K562 (cell line): ENCODE measurements at regions of chrX and their contacts with region 1.

Region 1: GRCh38 chrX:119516157-119516702 is 48.0 kb downstream of the SLC25A5 start:
- DNase-seq: peak; percentile 71 to 76 (median 74)
- ATAC-seq: peak; percentile 91
- H3K4me3 ChIP-seq: no peak overlapping the region
- H3K27ac ChIP-seq: no peak overlapping the region
- H3K4me1 ChIP-seq: no peaks in the 10 kb centered on the region; a peak in 2 of 5 replicates
- H3K27me3 ChIP-seq: no peaks in the 10 kb centered on the region; a peak in 1 of 5 replicates
- CTCF ChIP-seq: peak; percentile 87 to 94 (median 92)
- EP300 ChIP-seq: no peak
- POLR2A ChIP-seq: no peak
- RAD21 ChIP-seq: peak; percentile 79 to 94

Region 2: DNA sequence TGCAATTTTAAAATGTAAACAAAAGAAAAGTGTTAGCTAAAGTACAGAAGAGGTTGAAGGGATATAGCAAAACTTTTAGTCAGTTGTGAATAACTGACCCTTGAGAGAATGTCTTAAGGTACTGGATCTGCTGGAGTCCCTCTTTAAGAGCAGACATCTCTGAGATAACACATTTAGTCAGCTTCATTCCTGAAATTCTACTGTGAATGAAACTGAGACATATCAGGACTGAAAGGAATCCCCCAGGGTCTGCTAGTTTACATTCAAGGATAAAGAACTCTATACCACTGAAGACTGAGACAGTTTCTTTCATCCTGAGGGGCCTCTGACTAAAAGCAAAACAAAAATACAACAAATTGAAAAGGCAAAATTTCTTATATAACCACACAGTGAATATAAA is 225.8 kb before region 1 on chrX:
- CTCF ChIA-PET with region 1: no interaction called
- POLR2A ChIA-PET with region 1: no interaction called
- in situ Hi-C with region 1: no loop called
- intact Hi-C with region 1: loop called (anchors 2 kb)
- DNase-seq: no peak
- ATAC-seq: no peak
- H3K4me3 ChIP-seq: no peak overlapping the region
- H3K27ac ChIP-seq: no peak overlapping the region
- H3K4me1 ChIP-seq: no peaks in the 10 kb centered on the region
- H3K27me3 ChIP-seq: no peaks in the 10 kb centered on the region; a peak in 1 of 5 replicates
- CTCF ChIP-seq: no peak
- EP300 ChIP-seq: no peak
- POLR2A ChIP-seq: no peak
- RAD21 ChIP-seq: no peak

Region 3: DNA sequence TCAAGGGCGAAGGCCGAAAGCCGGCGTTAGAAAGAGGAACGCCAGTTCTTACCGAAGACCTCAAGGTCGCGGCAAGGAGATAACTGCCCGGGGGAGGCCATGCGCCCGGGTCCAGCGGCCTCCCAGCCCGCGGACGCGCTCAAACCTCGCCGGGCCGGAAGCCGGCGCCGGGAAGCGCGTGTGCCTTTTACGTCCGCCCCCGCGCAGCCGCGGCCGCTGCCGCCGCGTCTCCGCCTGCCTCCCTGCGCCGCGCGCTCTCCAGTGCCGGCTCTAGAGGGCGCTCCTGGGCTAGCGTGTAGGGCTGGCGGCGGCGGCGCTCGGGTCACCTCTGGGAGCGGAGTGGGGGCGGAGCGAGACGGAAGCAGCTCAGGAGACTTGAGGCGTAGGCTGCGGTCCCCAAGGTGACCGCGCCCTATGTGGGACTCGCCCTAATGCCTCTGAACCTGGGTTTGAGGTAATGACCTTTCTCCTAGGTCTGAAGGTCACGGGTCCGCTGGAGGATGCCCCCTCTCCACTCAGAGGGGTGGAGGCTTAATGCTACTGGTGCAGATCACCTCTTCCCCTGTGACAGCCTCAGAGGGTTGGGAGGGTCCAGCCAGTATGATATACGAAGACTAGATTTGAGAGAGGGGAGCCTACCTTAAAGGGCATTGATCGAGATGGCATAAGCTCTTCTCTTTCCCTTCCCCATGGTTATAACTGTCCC is 47.1 kb before region 1 on chrX:
- CTCF ChIA-PET with region 1: interaction called, 8 read pairs
- POLR2A ChIA-PET with region 1: interaction called, 6 read pairs
- in situ Hi-C with region 1: no loop called
- intact Hi-C with region 1: loop called (anchors 2 kb)
- DNase-seq: peak; percentile 73 to 94 (median 80)
- ATAC-seq: peak; percentile 86
- H3K4me3 ChIP-seq: peak overlapping the region; percentile 99
- H3K27ac ChIP-seq: peak overlapping the region; percentile 98
- H3K4me1 ChIP-seq: peaks cover 14 to 18% of the 10 kb centered on the region in 2 experiments; a peak in 3 of 5 replicates
- H3K27me3 ChIP-seq: no peaks in the 10 kb centered on the region
- CTCF ChIP-seq: peak; percentile 72 to 93 (median 76)
- EP300 ChIP-seq: peak; percentile 49; the same call in 1 of the 2 replicates
- POLR2A ChIP-seq: peak; percentile 54; the same call in 1 of the 2 replicates
- RAD21 ChIP-seq: peak; percentile 56 to 68

Region 4: GRCh38 chrX:119606280-119607015 is 90.2 kb after region 1 on chrX and contains the start of gene NKRF:
- CTCF ChIA-PET with region 1: no interaction called
- POLR2A ChIA-PET with region 1: no interaction called
- in situ Hi-C with region 1: no loop called
- intact Hi-C with region 1: loop called (anchors 10 kb)
- DNase-seq: peak; percentile 83 to 96 (median 86)
- ATAC-seq: peak; percentile 92
- H3K4me3 ChIP-seq: peak within 1 kb of the TSS; percentile 84
- H3K27ac ChIP-seq: peak within 1 kb of the TSS; percentile 95
- H3K4me1 ChIP-seq: peaks cover 7 to 12% of the 10 kb centered on the region in 2 experiments; a peak in 4 of 5 replicates
- H3K27me3 ChIP-seq: no peaks in the 10 kb centered on the region
- CTCF ChIP-seq: no peak; a peak in 1 of 6 replicates
- EP300 ChIP-seq: no peak
- POLR2A ChIP-seq: peak; percentile 96
- RAD21 ChIP-seq: no peak
- polyA plus RNA-seq, gene NKRF: 8.9 to 10.8 TPM

Region 5: DNA sequence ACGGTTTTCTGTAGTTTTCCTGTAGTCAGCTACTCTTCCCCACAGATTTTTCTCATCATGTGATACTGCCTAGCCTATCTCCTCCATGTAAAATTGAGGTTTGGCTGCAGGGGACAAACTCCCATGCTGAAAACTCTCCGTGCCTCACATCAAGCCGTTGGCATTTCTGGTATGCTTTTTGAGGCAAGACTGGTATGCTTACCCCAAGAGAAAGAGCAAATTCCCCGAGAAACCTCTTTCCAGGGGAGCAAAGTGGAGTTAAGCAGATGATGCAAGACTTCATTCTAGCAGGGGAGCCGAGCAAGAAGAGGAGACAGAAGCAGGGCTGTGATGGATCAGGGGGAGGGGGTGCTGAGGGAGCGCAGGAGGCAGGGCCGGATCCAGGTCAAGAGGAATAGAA is 247.0 kb after region 1 on chrX:
- CTCF ChIA-PET with region 1: no interaction called
- POLR2A ChIA-PET with region 1: no interaction called
- in situ Hi-C with region 1: loop called (anchors 10 kb)
- intact Hi-C with region 1: no loop called
- DNase-seq: no peak
- ATAC-seq: peak; percentile 18; the same call in 2 of the 3 replicates
- H3K4me3 ChIP-seq: no peak overlapping the region
- H3K27ac ChIP-seq: no peak overlapping the region
- H3K4me1 ChIP-seq: peaks cover 0 to 17% of the 10 kb centered on the region in 2 experiments; a peak in 3 of 5 replicates
- H3K27me3 ChIP-seq: no peaks in the 10 kb centered on the region
- CTCF ChIP-seq: no peak
- EP300 ChIP-seq: no peak
- POLR2A ChIP-seq: no peak
- RAD21 ChIP-seq: no peak

Region 6: GRCh38 chrX:119880552-119881437 is 364.6 kb after region 1 on chrX:
- CTCF ChIA-PET with region 1: no interaction called
- POLR2A ChIA-PET with region 1: no interaction called
- in situ Hi-C with region 1: loop called (anchors 10 kb)
- intact Hi-C with region 1: loop called (anchors 5 kb)
- DNase-seq: peak; percentile 32 to 60 (median 48)
- ATAC-seq: peak; percentile 97
- H3K4me3 ChIP-seq: no peak overlapping the region
- H3K27ac ChIP-seq: no peak overlapping the region
- H3K4me1 ChIP-seq: no peaks in the 10 kb centered on the region; a peak in 1 of 5 replicates
- H3K27me3 ChIP-seq: no peaks in the 10 kb centered on the region
- CTCF ChIP-seq: peak; percentile 68 to 78 (median 73)
- EP300 ChIP-seq: no peak
- POLR2A ChIP-seq: 0 out of 2 replicates have a peak, but pooled peaks have one; percentile 21
- RAD21 ChIP-seq: peak; percentile 46 to 68; a peak in 3 of 4 replicates